OCI-LY7 (cell line): ENCODE measurements at regions of chr9 and their contacts with region 1.

Region 1: GRCh38 chr9:20599195-20599594 is 23.1 kb downstream of the MLLT3 start:
- DNase-seq: no peak
- H3K4me3 ChIP-seq: no peak overlapping the region
- H3K27ac ChIP-seq: no peak overlapping the region
- H3K4me1 ChIP-seq: peaks cover 9% of the 10 kb centered on the region
- CTCF ChIP-seq: no peak

Region 2: GRCh38 chr9:20356403-20357035 is 242.7 kb before region 1 on chr9:
- CTCF ChIA-PET with region 1: no interaction called
- POLR2A ChIA-PET with region 1: no interaction called
- intact Hi-C with region 1: no loop called
- DNase-seq: peak; percentile 65
- H3K4me3 ChIP-seq: no peak overlapping the region
- H3K27ac ChIP-seq: no peak overlapping the region
- H3K4me1 ChIP-seq: peaks cover 6% of the 10 kb centered on the region
- CTCF ChIP-seq: peak; percentile 79

Region 3: GRCh38 chr9:20544953-20545622 is 54.1 kb before region 1 on chr9:
- CTCF ChIA-PET with region 1: no interaction called
- POLR2A ChIA-PET with region 1: no interaction called
- intact Hi-C with region 1: loop called (anchors 5 kb)
- DNase-seq: no peak
- H3K4me3 ChIP-seq: no peak overlapping the region
- H3K27ac ChIP-seq: no peak overlapping the region
- H3K4me1 ChIP-seq: no peaks in the 10 kb centered on the region
- CTCF ChIP-seq: no peak

Region 4: GRCh38 chr9:20611751-20612287 is 12.6 kb after region 1 on chr9:
- CTCF ChIA-PET with region 1: no interaction called
- POLR2A ChIA-PET with region 1: interaction called, 11 read pairs
- intact Hi-C with region 1: no loop called
- DNase-seq: peak; percentile 12
- H3K4me3 ChIP-seq: no peak overlapping the region
- H3K27ac ChIP-seq: no peak overlapping the region
- H3K4me1 ChIP-seq: no peaks in the 10 kb centered on the region
- CTCF ChIP-seq: peak; percentile 53

Region 5: GRCh38 chr9:20754556-20754955 is 155.4 kb after region 1 on chr9:
- CTCF ChIA-PET with region 1: no interaction called
- POLR2A ChIA-PET with region 1: no interaction called
- intact Hi-C with region 1: no loop called
- DNase-seq: no peak
- H3K4me3 ChIP-seq: no peak overlapping the region
- H3K27ac ChIP-seq: no peak overlapping the region
- H3K4me1 ChIP-seq: no peaks in the 10 kb centered on the region
- CTCF ChIP-seq: no peak

Region 6: GRCh38 chr9:20823051-20823450 is 223.9 kb after region 1 on chr9:
- CTCF ChIA-PET with region 1: no interaction called
- POLR2A ChIA-PET with region 1: no interaction called
- intact Hi-C with region 1: no loop called
- DNase-seq: no peak
- H3K4me3 ChIP-seq: no peak overlapping the region
- H3K27ac ChIP-seq: no peak overlapping the region
- H3K4me1 ChIP-seq: no peaks in the 10 kb centered on the region
- CTCF ChIP-seq: no peak